ENCODE measurements at regions of chr4 and their contacts with region 1.

Region 1: GRCh38 chr4:76430519-76431388 is 4.3 kb upstream of the SHROOM3 start:
- DNase-seq: peak; percentile 51
- ATAC-seq: peak; percentile 62
- H3K4me3 ChIP-seq: no peak overlapping the region
- H3K27ac ChIP-seq: no peak overlapping the region
- H3K4me1 ChIP-seq: peaks cover 6% of the 10 kb centered on the region; the same call in 1 of the 2 replicates
- H3K27me3 ChIP-seq: no peaks in the 10 kb centered on the region
- CTCF ChIP-seq: peak; percentile 65
- EP300 ChIP-seq: no peak
- POLR2A ChIP-seq: no peak
- RAD21 ChIP-seq: no peak; the same call in 1 of the 2 replicates

Region 2: DNA sequence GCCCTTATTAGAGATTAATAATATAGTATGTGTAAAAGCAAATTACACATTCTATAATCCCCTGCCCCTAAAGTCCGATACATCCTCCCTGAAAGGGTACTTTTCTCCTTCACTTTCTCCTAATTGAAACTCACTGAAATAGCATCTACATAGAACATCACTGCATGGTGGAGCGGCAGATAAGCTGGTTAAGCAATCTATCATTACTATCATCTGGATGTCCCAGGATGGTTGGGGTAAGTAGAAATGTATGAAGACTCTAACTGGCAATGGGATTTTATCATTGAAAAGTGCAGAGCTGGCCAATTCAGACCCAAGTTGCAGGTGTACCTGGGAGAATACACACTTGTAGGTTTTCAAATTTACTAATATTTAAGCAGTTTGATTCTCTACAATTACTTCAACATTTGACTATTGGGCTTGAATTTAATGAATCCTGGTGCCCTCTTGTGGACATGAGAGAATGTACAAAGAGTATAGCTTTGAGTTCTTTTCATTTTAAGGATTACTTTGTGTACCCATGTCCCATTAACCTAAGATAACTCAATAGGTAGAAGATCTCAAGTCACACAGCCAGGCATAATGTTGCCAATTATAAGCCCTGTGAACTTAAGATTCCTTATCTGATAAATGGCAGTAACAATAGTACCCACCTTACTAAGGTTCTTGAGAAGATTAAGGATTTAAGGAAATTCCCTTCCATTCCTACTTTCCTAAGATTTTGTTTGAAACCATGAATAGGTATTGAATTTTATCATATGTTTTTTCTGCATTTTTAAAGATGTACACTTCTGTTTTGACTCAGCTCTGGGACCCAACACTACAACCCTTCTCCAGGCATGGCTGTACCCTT is 74.1 kb after region 1 on chr4:
- CTCF ChIA-PET with region 1: interaction called, 19 read pairs
- POLR2A ChIA-PET with region 1: no interaction called
- in situ Hi-C with region 1: loop called (anchors 5 kb)
- intact Hi-C with region 1: loop called (anchors 1 kb)
- DNase-seq: peak; percentile 36
- ATAC-seq: no peak
- H3K4me3 ChIP-seq: no peak overlapping the region
- H3K27ac ChIP-seq: no peak overlapping the region
- H3K4me1 ChIP-seq: no peaks in the 10 kb centered on the region
- H3K27me3 ChIP-seq: no peaks in the 10 kb centered on the region
- CTCF ChIP-seq: peak; percentile 62
- EP300 ChIP-seq: no peak
- POLR2A ChIP-seq: no peak
- RAD21 ChIP-seq: no peak; the same call in 1 of the 2 replicates

Region 3: DNA sequence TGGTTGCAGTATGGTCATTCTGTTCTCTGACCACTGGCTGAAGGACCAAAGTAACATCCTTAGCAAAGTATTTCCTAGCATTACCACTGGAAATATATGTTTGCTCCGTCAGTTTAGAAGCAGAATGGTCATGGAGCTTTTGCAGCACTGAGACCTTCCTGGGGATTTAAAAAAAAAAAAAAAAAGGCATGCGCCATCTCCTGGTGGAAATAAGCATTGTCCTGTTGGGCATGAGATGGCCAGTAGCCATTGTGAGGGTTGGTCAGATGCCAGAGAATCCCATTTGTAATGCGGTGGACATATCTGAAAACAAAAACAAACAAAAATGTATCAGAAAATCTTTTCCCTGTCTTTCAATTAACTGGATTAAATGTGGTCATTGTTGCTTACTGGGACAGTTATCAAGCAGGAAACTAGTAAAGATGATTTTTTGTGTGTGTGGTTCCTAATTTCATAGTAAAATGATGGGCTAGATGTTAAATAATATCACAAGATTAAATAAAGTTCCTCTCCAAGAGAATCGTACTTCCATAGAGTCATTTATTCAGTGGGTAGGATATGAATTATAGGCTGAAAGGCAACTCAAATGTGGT is 327.6 kb after region 1 on chr4:
- CTCF ChIA-PET with region 1: no interaction called
- POLR2A ChIA-PET with region 1: no interaction called
- in situ Hi-C with region 1: loop called (anchors 5 kb)
- intact Hi-C with region 1: loop called (anchors 2 kb)
- DNase-seq: peak; percentile 28
- ATAC-seq: peak; percentile 77
- H3K4me3 ChIP-seq: no peak overlapping the region
- H3K27ac ChIP-seq: no peak overlapping the region
- H3K4me1 ChIP-seq: no peaks in the 10 kb centered on the region
- H3K27me3 ChIP-seq: peaks cover 0 to 6% of the 10 kb centered on the region in 2 experiments; a peak in 3 of 5 replicates
- CTCF ChIP-seq: peak; percentile 64
- EP300 ChIP-seq: no peak
- POLR2A ChIP-seq: no peak
- RAD21 ChIP-seq: no peak

Region 4: GRCh38 chr4:77044461-77045150 is 613.9 kb after region 1 on chr4:
- CTCF ChIA-PET with region 1: no interaction called
- POLR2A ChIA-PET with region 1: no interaction called
- in situ Hi-C with region 1: no loop called
- intact Hi-C with region 1: loop called (anchors 5 kb)
- DNase-seq: peak; percentile 9
- ATAC-seq: peak; percentile 39
- H3K4me3 ChIP-seq: no peak overlapping the region
- H3K27ac ChIP-seq: no peak overlapping the region
- H3K4me1 ChIP-seq: peaks cover 13% of the 10 kb centered on the region
- H3K27me3 ChIP-seq: no peaks in the 10 kb centered on the region
- CTCF ChIP-seq: peak; percentile 58
- EP300 ChIP-seq: no peak
- POLR2A ChIP-seq: no peak
- RAD21 ChIP-seq: no peak